Activated CD4-positive, alpha-beta T cell treated with anti-CD3 and anti-CD28 coated beads for 36 hours (primary cell): ENCODE measurements at regions of chr17 and their contacts with region 1.

Region 1: GRCh38 chr17:38868817-38869525 is 887 bp upstream of the LASP1 start:
- DNase-seq: peak; percentile 95
- ATAC-seq: peak; percentile 56
- H3K4me3 Mint-ChIP-seq: peak overlapping the region; percentile 93
- H3K27ac Mint-ChIP-seq: peak overlapping the region; percentile 93
- H3K4me1 Mint-ChIP-seq: peaks cover 44% of the 10 kb centered on the region
- H3K27me3 Mint-ChIP-seq: peaks cover 2% of the 10 kb centered on the region

Region 2: DNA sequence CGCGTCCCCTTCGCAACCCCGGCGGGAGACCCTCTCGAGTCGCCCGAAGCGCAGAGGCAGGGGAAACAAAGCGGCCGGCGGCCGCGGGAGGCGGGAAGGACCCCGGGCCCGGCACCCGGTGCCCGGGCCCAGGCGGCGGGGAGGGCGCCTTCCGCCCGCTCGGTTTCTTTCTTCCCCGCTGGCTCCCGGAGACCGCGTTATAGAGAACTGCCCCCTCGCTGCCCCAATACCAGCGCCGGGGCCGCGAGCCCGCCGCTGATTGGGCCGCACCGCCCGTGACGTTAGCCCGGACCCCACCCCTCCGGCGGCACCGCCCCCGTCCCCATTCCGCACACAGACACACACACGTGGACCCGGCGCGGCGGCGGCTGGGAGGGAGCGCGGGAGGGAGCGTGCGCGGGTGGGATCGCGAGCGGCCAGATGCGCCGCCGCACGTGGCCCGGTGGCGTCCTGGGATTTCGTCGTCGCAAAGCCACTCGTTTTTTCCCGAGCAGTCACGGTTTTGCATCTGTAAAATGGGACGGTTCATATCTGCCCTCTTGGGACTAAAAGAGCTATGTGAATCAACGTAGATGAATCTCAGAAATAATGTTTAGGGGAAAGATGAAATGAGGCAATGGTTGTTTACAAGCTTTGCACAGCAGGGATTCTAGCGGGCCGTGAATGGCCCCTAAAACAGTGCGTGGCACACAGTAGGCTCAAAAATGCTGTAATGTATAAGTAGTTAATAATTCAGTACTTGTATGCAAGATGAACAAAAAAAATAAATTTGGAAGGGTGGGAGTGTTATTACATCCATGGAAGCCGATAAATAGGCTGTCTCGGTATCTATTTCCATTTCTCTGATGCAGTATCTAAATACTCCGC is 194.0 kb before region 1 on chr17 and contains the start of gene EPOP:
- CTCF ChIA-PET with region 1: no interaction called
- POLR2A ChIA-PET with region 1: no interaction called
- intact Hi-C with region 1: loop called in 1 of 2 experiments (anchors 2 kb)
- DNase-seq: peak; percentile 96
- ATAC-seq: peak; percentile 78
- H3K4me3 Mint-ChIP-seq: peak within 1 kb of the TSS; percentile 76
- H3K27ac Mint-ChIP-seq: peak within 1 kb of the TSS; percentile 85
- H3K4me1 Mint-ChIP-seq: peaks cover 47% of the 10 kb centered on the region
- H3K27me3 Mint-ChIP-seq: peaks cover 9% of the 10 kb centered on the region
- total RNA-seq, gene EPOP: 31.8 to 37.3 TPM

Region 3: GRCh38 chr17:38824899-38825761 is 43.8 kb before region 1 on chr17 and contains the start of gene CWC25:
- CTCF ChIA-PET with region 1: interaction called, 3 read pairs
- POLR2A ChIA-PET with region 1: interaction called, 9 read pairs
- intact Hi-C with region 1: loop called (anchors 1 kb)
- DNase-seq: peak; percentile 95
- ATAC-seq: peak; percentile 82
- H3K4me3 Mint-ChIP-seq: peak within 1 kb of the TSS; percentile 99
- H3K27ac Mint-ChIP-seq: peak within 1 kb of the TSS; percentile 99
- H3K4me1 Mint-ChIP-seq: peaks cover 27% of the 10 kb centered on the region
- H3K27me3 Mint-ChIP-seq: no peaks in the 10 kb centered on the region
- total RNA-seq, gene CWC25: 23.3 to 24.0 TPM

Region 4: GRCh38 chr17:38841141-38841485 is 27.9 kb before region 1 on chr17:
- CTCF ChIA-PET with region 1: no interaction called
- POLR2A ChIA-PET with region 1: no interaction called
- intact Hi-C with region 1: no loop called
- DNase-seq: peak; percentile 37
- ATAC-seq: peak; percentile 36
- H3K4me3 Mint-ChIP-seq: peak overlapping the region; percentile 57
- H3K27ac Mint-ChIP-seq: no peak overlapping the region
- H3K4me1 Mint-ChIP-seq: peaks cover 2% of the 10 kb centered on the region
- H3K27me3 Mint-ChIP-seq: no peaks in the 10 kb centered on the region

Region 5: DNA sequence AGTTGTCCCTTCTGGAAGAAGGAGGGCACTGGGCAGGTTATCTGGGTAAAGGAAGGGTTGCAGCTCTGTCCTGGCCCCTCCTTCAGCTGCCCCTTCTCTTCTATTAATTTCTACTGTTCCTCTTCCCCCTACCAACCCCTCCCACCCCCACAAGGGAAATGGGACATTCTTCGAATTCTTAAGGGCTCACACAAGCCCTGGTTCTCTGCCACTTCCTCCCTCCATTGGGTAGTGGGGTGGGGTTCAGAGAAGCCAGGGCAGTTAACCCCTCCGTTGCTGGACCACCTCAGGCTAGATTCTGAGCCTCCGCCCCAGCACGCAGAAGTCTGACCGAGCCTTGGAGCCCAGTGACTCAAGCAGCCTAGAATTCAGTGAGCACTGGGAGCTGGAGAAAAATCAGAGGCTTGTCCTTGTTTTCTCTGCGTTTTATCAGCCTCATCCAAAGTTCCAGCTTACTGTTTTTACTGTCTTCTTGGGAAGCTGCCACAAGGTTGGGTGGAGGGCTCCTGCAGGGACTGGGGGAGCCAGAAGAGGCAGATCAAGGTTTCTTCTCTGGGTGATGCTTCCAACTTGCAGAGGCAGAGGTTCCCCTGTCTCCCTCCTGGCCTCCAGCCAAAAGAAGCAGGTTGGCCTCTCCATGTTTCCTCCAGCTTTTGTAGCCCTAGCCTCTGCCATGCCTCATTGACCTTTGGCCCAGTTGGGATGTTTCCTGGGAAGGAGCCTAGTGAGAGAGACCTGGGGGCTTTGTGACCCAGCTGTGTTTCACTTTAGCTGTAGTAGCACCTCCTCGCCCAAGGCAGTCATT is 11.1 kb after region 1 on chr17:
- CTCF ChIA-PET with region 1: interaction called, 8 read pairs
- POLR2A ChIA-PET with region 1: interaction called, 5 read pairs
- intact Hi-C with region 1: loop called in 1 of 2 experiments (anchors 1 kb)
- DNase-seq: no peak
- ATAC-seq: no peak
- H3K4me3 Mint-ChIP-seq: no peak overlapping the region
- H3K27ac Mint-ChIP-seq: peak overlapping the region; percentile 75
- H3K4me1 Mint-ChIP-seq: peaks cover 90% of the 10 kb centered on the region
- H3K27me3 Mint-ChIP-seq: no peaks in the 10 kb centered on the region

Region 6: GRCh38 chr17:38943607-38944006 is 74.6 kb after region 1 on chr17:
- CTCF ChIA-PET with region 1: no interaction called
- POLR2A ChIA-PET with region 1: no interaction called
- intact Hi-C with region 1: loop called in 1 of 2 experiments (anchors 5 kb)
- DNase-seq: peak; percentile 56
- ATAC-seq: peak; percentile 82
- H3K4me3 Mint-ChIP-seq: no peak overlapping the region
- H3K27ac Mint-ChIP-seq: peak overlapping the region; percentile 70
- H3K4me1 Mint-ChIP-seq: peaks cover 11% of the 10 kb centered on the region
- H3K27me3 Mint-ChIP-seq: no peaks in the 10 kb centered on the region

Region 7: GRCh38 chr17:39235555-39236449 is 366.8 kb after region 1 on chr17:
- CTCF ChIA-PET with region 1: no interaction called
- POLR2A ChIA-PET with region 1: no interaction called
- intact Hi-C with region 1: loop called in 1 of 2 experiments (anchors 5 kb)
- DNase-seq: peak; percentile 78
- ATAC-seq: peak; percentile 84
- H3K4me3 Mint-ChIP-seq: no peak overlapping the region
- H3K27ac Mint-ChIP-seq: no peak overlapping the region
- H3K4me1 Mint-ChIP-seq: peaks cover 41% of the 10 kb centered on the region
- H3K27me3 Mint-ChIP-seq: peaks cover 5% of the 10 kb centered on the region